Lower lobe of right lung (tissue), 2 donors: ENCODE measurements at regions of chr2 and their contacts with region 1.

Region 1: GRCh38 chr2:227653419-227653818 is 13.2 kb upstream of the SCYGR5 start:
- DNase-seq: no peak
- ATAC-seq: no peak
- H3K4me3 ChIP-seq: no peak overlapping the region
- H3K27ac ChIP-seq: no peak overlapping the region
- H3K4me1 ChIP-seq: peaks cover 6% of the 10 kb centered on the region
- H3K27me3 ChIP-seq: no peaks in the 10 kb centered on the region
- CTCF ChIP-seq: no peak

Region 2: DNA sequence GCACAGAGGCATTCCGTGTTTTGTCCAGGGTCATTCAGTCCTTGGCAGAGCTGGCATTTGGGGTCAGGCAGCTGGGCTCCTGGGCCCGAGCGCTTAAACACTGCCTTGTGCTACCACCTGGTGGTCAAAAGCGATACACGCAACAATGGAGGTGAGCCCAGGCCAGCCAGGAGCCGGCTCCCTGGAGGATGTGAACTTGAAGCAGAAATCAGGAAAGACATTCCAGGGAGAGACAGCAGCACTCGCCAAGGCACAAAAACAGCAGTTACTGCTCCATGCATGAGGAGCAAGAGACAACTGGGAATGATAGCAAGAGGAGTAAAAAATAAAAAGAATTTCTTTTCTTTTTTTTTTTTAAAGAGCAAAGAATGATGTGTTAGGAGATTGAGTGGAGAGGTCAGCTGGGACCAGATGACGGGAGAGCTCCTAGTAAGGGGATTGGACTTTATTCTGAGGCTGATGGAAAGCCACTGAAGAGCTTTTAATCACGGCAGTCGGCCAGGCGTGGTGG is 113.0 kb after region 1 on chr2:
- intact Hi-C with region 1: loop called (anchors 5 kb)
- DNase-seq: peak; percentile 80
- ATAC-seq: peak; percentile 94 to 96
- H3K4me3 ChIP-seq: no peak overlapping the region
- H3K27ac ChIP-seq: no peak overlapping the region
- H3K4me1 ChIP-seq: peaks cover 18% of the 10 kb centered on the region
- H3K27me3 ChIP-seq: no peaks in the 10 kb centered on the region
- CTCF ChIP-seq: peak; percentile 90

Region 3: GRCh38 chr2:227939271-227940027 is 286.0 kb after region 1 on chr2:
- intact Hi-C with region 1: no loop called
- DNase-seq: no peak
- ATAC-seq: peak in 1 of 2 donors; percentile 19
- H3K4me3 ChIP-seq: no peak overlapping the region
- H3K27ac ChIP-seq: no peak overlapping the region
- H3K4me1 ChIP-seq: no peaks in the 10 kb centered on the region
- H3K27me3 ChIP-seq: no peaks in the 10 kb centered on the region
- CTCF ChIP-seq: peak; percentile 33